Adrenal gland (tissue), 19 donors: ENCODE measurements at regions of chr16 and their contacts with region 1.

Region 1: DNA sequence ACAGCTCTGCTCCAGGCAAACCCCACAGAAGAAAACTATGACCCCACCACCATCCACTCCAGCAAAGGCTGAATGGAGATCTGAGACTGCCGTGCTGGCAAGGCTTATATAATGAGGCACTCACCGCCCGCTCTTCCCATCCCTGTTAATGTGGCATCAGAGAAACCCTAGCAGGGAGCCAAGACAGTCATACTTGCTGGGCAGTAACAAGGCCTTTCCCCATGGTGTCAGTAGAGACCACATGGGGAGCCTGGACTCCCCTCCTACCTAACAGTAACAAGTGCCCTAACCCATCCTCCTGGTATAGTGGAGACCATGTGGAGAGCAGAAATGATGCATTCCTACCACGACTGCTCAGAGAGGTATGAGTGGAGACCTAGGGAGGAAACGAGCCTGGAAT is 235.2 kb downstream of the C16orf78 start:
- DNase-seq: peak in 4 of 7 donors; percentile 18 to 78 (median 28)
- H3K4me3 ChIP-seq: no peak overlapping the region
- H3K27ac ChIP-seq: no peak overlapping the region
- H3K4me1 ChIP-seq: no peaks in the 10 kb centered on the region
- H3K27me3 ChIP-seq: no peaks in the 10 kb centered on the region
- CTCF ChIP-seq: peak in 4 of 6 experiments; percentile 37 to 52 (median 44)
- POLR2A ChIP-seq: no peak

Region 2: DNA sequence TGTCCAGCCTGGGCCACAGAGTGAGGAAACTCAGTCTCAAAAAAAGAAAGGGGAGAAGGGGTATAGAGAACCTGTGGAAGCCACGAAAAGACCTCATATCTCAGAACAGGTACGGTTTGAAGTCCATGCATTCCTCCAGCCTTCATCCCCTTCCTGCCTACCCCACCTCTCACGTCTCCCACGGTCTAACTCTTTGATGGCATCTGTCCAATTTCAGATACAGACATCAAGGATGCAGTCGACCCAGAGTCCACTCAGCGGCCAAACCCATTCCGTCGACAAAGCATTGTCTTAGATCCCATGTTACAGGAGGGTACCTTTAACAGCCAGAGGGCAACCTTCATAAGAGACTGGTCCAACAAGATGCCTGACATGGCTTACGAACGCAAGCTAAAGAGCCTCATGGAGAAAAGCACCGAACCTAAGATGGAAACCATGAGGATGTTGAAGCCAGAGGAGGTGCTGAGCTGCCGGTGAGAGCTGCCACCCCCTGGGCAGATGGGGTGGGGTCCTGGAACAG is 212.5 kb before region 1 on chr16:
- intact Hi-C with region 1: no loop called
- DNase-seq: peak in 1 of 7 donors; percentile 18
- H3K4me3 ChIP-seq: no peak overlapping the region
- H3K27ac ChIP-seq: no peak overlapping the region
- H3K4me1 ChIP-seq: no peaks in the 10 kb centered on the region
- H3K27me3 ChIP-seq: peaks cover 6% of the 10 kb centered on the region
- CTCF ChIP-seq: no peak
- POLR2A ChIP-seq: no peak

Region 3: DNA sequence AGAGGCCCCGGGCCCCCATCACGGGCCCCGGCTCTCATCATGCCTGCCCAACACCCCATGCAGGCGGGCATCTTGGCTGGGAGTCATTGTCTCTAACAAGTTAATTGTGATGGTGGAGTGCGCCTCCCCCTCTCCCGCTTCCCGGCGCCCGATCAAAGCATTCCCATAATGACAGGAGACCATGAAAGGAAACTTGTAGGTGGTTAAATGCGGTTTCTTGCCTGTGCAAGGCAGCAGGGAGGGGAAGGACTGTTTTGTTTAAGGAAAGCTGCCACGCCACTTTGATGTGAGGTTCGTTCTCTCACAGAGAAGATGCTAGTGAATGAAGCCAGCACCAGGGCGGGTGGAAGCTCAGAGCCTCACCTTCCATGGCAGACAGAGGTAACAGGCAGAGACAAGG is 189.8 kb before region 1 on chr16:
- intact Hi-C with region 1: loop called in 1 of 2 experiments (anchors 10 kb)
- DNase-seq: no peak
- H3K4me3 ChIP-seq: no peak overlapping the region
- H3K27ac ChIP-seq: no peak overlapping the region
- H3K4me1 ChIP-seq: no peaks in the 10 kb centered on the region
- H3K27me3 ChIP-seq: no peaks in the 10 kb centered on the region
- CTCF ChIP-seq: no peak
- POLR2A ChIP-seq: no peak

Region 4: DNA sequence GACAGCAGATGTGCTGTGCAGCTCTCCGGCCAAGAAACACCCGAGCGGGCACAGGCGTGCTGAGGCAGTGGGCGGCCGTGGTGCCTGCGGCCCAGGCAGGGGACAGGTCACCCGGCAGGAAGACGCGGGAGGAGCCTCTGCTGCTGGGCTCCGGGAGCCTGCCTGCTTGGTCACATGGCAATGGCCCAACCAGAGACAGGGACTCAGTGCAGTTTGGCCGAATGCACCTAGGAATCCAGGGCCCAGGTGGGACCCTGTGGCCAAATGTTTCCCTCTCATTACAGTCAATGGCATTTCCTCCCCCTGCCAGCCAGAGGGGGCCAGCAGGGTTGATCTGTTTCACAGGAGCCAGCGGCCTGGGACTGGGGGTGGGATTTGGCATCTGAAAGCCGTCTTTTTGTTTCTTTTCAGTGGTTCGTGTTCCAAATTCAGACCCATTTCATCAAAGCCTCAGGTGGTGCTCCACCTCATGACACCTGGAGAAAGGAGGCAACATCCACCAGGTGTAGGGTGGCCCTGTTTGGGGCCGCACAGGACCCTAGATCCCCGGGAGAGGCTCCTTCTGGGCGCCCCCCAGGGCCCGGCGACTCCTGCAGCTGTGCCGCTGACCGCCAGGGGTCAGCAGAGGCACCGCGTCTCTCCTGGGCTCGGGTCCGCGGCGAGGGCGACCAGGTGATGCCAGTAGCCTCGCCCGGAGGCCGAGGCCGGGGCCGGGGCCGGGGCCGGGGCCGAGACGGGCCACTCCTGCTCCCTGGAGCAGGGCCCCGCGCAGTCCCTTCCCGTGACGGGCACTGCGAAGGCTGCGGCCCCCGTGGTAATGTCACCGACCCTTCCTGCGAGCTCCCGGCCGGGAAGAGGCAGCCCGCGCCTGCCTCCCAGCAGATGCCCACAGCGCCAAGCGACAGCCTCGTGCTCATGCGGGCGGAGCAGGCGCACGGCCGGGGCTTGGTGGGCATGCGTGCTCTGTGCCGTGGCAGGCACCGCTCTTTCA is 116.7 kb before region 1 on chr16:
- intact Hi-C with region 1: no loop called
- DNase-seq: peak; percentile 48 to 79 (median 66)
- H3K4me3 ChIP-seq: peak overlapping the region in 2 of 4 donors; percentile 13 to 50
- H3K27ac ChIP-seq: peak overlapping the region in 2 of 5 donors; percentile 21 to 38
- H3K4me1 ChIP-seq: peaks cover 0 to 6% of the 10 kb centered on the region in 2 donors
- H3K27me3 ChIP-seq: no peaks in the 10 kb centered on the region
- CTCF ChIP-seq: peak; percentile 66 to 92 (median 86)
- POLR2A ChIP-seq: no peak

Region 5: GRCh38 chr16:49855280-49855821 is 246.6 kb after region 1 on chr16:
- intact Hi-C with region 1: loop called in 1 of 2 experiments (anchors 10 kb)
- DNase-seq: peak; percentile 79 to 91 (median 82)
- H3K4me3 ChIP-seq: peak overlapping the region; percentile 18 to 94 (median 40)
- H3K27ac ChIP-seq: peak overlapping the region in 4 of 5 donors; percentile 11 to 94 (median 75)
- H3K4me1 ChIP-seq: peaks cover 11 to 29% of the 10 kb centered on the region in 2 donors
- H3K27me3 ChIP-seq: no peaks in the 10 kb centered on the region
- CTCF ChIP-seq: no peak
- POLR2A ChIP-seq: peak; percentile 31 to 51